ENCODE measurements at regions of chr2 and their contacts with region 1.

Region 1: GRCh38 chr2:226800941-226801784 is 1.5 kb upstream of the IRS1 start:
- DNase-seq: peak; percentile 88 to 96
- H3K4me3 ChIP-seq: peak overlapping the region; percentile 62 to 94 (median 82)
- H3K27ac ChIP-seq: peak overlapping the region; percentile 93 to 96 (median 96)
- H3K4me1 ChIP-seq: peaks cover 41 to 58% (median 51%) of the 10 kb centered on the region in 4 donors
- H3K27me3 ChIP-seq: peaks cover 0 to 53% (median 0%) of the 10 kb centered on the region in 3 donors
- CTCF ChIP-seq: no peak
- EP300 ChIP-seq: no peak
- POLR2A ChIP-seq: peak in 2 of 4 donors; percentile 44 to 56

Region 2: DNA sequence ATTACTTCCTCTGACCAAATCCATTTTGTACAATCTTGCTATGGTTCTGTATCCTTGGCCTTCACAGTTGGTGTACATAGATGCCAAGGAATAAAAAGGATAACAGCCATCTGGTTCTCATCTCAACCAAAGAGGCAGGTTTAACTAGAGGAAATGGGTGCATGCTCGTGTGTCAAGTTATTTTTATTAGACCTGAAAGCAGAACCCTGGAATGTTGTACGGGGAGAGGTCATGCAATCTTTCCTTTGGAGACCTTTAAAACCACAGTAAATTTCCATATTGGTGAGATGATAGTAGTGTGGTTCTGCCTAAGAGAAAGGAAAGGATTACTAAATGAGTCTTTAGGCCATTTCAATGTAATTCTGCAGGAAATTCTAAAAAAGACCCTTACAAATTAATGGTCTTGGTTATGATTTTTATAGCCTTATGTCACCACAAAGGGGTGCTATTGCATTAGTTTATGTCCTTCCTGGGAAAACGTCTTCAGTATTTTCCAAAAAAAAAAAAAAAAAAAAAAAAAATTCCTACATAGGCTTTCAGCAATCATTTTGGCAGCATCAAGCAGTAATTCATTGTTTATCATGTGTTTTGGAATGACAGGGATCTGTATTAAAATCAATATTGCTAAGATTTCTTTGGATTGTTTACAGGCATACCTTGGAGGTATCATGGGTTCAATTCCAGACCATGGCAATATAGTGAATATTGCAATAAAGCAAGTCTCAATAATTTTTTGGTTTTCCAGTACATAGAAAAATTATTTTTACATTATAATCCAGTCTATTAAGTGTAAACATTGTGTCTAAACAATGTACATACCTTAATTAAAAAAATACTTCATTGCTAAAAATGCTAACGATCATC is 1130.8 kb before region 1 on chr2:
- intact Hi-C with region 1: loop called (anchors 10 kb)
- DNase-seq: peak in 1 of 2 donors; percentile 75
- H3K4me3 ChIP-seq: no peak overlapping the region
- H3K27ac ChIP-seq: no peak overlapping the region
- H3K4me1 ChIP-seq: peaks cover 0 to 4% (median 0%) of the 10 kb centered on the region in 4 donors
- H3K27me3 ChIP-seq: no peaks in the 10 kb centered on the region
- CTCF ChIP-seq: peak in 4 of 7 experiments; percentile 2 to 31 (median 18)
- EP300 ChIP-seq: no peak
- POLR2A ChIP-seq: no peak

Region 3: DNA sequence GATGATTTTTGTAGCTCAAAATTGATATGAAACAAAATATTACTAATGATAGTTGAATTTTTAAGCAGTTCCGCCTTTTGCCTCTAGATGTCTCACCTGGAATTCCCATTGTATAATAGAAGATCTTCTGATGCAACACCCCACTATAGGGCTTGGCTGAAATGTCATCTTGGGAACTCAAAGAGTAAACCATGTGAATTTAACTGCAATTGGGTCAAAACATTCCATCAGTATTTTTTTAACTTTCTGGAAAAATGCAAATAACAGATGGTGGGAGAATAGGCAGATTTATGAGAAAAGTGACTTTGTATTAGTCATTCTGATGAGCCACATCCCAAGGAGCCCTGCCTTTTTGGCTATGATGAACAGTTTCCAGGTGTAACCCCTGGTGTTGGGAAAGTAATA is 911.7 kb before region 1 on chr2:
- intact Hi-C with region 1: loop called (anchors 10 kb)
- DNase-seq: peak in 1 of 2 donors; percentile 64
- H3K4me3 ChIP-seq: no peak overlapping the region
- H3K27ac ChIP-seq: no peak overlapping the region
- H3K4me1 ChIP-seq: peaks cover 0 to 5% (median 0%) of the 10 kb centered on the region in 4 donors
- H3K27me3 ChIP-seq: no peaks in the 10 kb centered on the region
- CTCF ChIP-seq: peak in 5 of 7 experiments; percentile 51 to 75 (median 65)
- EP300 ChIP-seq: no peak
- POLR2A ChIP-seq: no peak

Region 4: DNA sequence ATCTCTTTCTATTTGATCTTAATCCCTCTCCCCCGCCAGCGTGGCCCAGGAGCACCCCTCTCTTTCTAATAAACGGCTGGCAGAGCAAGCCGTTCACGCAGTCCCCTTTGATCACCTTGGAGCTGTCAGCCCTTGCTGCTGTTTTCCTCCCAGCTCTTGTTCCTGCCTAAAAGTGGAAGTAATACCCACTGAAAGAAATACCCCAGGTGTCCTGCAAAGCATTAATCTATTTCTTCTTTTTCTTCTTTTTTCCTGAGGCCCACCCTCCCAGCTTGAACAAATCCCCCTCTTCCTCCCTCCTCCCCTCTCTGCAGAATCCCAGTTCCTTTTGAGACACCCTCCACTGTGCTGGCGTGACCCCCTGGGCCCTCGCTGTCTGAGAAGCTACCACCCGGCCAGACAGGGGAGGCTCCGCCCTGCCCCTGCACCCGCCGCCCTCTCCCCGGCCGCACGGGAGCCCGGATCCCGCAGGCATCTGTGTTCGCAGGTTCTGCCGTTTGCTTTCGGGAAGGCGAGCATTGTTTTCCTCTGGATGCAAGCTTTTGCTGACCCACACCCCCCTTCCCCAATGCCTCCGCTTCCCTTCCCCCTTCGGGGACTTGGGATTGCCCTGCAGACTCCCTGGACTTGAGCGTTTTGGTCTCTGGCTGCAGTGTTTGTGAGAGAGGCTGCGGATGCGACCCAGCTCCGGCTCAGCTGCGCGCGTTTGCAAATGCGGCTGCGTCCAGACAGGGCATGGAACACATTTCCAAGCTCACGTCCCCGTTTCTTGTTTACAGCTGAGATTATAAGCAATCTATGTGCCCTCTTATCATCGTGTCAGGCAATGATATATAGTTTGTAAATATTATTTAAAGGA is 770.1 kb before region 1 on chr2:
- intact Hi-C with region 1: loop called (anchors 5 kb)
- DNase-seq: peak; percentile 31 to 87
- H3K4me3 ChIP-seq: peak overlapping the region; percentile 45 to 57 (median 51)
- H3K27ac ChIP-seq: peak overlapping the region in 4 of 5 donors; percentile 18 to 62 (median 40)
- H3K4me1 ChIP-seq: peaks cover 10 to 22% (median 15%) of the 10 kb centered on the region in 4 donors
- H3K27me3 ChIP-seq: no peaks in the 10 kb centered on the region
- CTCF ChIP-seq: no peak
- EP300 ChIP-seq: no peak
- POLR2A ChIP-seq: no peak

Region 5: DNA sequence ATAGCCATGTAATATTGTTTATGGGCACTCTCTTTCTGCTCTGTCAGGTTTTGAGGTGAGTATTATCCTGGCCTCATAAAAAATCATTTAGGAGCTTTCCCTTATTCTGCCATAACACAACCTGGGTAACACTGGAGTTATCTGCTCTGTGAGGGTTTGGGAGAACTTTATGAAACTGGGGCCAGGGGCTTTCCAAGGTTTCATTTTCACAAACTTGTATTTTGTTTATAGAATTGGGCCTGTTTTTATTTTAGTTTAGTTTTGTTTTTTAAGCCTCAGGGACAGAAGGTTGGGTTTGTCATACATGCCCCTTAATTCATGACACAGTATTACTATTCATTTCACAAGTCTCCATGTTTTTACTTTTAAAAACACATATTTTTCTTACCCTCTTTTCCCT is 85.0 kb before region 1 on chr2:
- intact Hi-C with region 1: no loop called
- DNase-seq: no peak
- H3K4me3 ChIP-seq: no peak overlapping the region
- H3K27ac ChIP-seq: no peak overlapping the region
- H3K4me1 ChIP-seq: no peaks in the 10 kb centered on the region
- H3K27me3 ChIP-seq: no peaks in the 10 kb centered on the region
- CTCF ChIP-seq: no peak
- EP300 ChIP-seq: no peak
- POLR2A ChIP-seq: no peak

Measured in stomach (tissue), 19 donors.